ENCODE measurements at regions of chr4 and their contacts with region 1.

Region 1: DNA sequence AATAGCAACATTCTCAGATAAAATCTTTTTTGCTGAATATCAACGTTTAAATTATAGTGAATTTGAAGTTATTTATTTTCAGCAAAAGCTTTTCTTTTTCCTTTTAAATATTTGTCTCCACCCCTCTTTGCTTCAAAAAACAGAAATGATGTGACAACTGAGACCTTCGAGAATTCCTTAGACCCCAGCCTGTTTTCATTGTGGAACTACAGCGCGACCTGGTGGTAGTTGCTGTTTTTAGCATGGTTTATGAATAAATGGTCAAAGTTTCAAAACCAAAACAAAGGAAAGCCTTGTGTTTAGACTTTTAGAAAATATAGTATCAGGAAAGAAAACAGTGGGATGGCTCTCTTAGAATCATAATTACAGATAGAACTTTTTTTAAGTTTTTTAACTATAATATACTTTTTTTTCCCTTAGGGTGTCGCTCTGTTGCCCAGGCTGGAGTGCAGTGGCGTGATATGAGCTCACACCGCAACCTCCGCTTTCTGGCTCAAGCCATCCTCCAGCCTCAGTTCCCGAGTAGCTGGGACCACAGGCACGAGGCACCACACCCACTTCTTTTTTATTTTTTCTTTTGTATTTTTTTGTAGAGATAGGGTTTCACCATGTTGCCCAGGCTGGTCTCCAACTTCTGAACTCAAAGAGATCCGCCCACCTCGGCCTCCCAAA is 26.8 kb upstream of the TMEM184C start:
- DNase-seq: peak; percentile 45
- H3K4me3 ChIP-seq: no peak overlapping the region
- H3K27ac ChIP-seq: no peak overlapping the region
- H3K4me1 ChIP-seq: no peaks in the 10 kb centered on the region
- CTCF ChIP-seq: peak; percentile 88

Region 2: DNA sequence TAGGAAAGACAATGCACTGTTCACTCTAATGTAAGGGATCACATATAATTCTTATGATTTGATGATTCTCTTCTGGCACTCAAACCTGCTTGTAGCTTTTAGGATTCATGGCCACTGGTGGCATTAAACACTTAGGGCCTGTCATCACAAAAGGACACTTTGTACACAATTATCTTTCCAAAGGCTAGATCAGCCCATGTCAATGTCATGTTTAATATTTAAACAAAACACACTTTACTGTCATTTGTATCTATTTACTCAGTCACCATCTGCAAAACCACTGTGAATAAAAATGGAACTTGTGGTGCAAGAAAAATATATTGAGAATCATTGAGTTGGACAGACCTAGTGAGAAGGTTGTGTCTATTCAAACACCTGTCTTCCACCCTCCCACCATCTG is 561.1 kb before region 1 on chr4:
- CTCF ChIA-PET with region 1: no interaction called
- POLR2A ChIA-PET with region 1: no interaction called
- intact Hi-C with region 1: loop called (anchors 10 kb)
- DNase-seq: no peak
- H3K4me3 ChIP-seq: no peak overlapping the region
- H3K27ac ChIP-seq: no peak overlapping the region
- H3K4me1 ChIP-seq: no peaks in the 10 kb centered on the region
- CTCF ChIP-seq: no peak

Region 3: GRCh38 chr4:147160908-147161513 is 429.4 kb before region 1 on chr4:
- CTCF ChIA-PET with region 1: no interaction called
- POLR2A ChIA-PET with region 1: no interaction called
- intact Hi-C with region 1: loop called (anchors 2 kb)
- DNase-seq: peak; percentile 39
- H3K4me3 ChIP-seq: no peak overlapping the region
- H3K27ac ChIP-seq: no peak overlapping the region
- H3K4me1 ChIP-seq: no peaks in the 10 kb centered on the region
- CTCF ChIP-seq: peak; percentile 85

Region 4: DNA sequence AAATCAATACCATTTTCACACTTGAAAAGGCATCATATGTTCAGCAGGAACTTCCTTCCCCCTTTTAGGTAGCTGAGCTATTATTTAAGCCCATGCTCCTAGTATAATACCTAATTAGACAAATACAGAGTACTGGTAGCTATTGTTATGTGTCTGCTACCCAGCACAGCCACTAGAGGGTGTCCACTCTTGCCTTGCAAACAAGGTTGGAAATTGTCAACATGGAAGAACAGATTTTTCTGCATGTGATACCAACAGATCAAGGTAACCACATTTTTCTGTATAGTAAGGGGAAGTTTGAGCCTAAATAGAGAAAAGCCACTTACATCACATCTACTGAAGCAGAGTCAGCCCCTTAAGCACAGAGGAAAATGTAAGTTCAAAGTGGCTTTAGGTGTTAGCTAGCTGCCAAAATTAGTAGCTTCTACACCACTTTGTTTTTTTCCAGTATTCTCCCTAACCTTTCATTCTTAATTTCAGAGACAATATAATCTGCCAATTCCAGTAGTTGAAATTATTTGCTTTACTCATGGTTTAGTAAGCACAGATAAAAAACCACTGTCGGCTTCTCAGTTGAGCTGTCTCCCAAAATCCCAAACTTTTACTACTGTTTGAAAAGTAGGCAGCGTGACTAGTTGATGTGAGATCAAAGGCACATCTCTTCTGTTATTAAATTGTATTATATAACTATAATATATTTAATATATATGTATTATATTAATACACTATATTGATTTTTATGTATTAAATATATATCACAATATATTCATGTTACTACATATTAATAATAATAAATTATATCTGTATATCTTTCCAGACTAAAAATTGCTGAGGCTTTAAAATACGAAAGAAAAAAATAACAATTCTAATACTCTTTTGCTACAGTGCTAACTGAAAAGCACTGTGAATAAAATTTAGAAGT is 71.3 kb before region 1 on chr4:
- CTCF ChIA-PET with region 1: no interaction called
- POLR2A ChIA-PET with region 1: no interaction called
- intact Hi-C with region 1: loop called (anchors 2 kb)
- DNase-seq: peak; percentile 59
- H3K4me3 ChIP-seq: no peak overlapping the region
- H3K27ac ChIP-seq: no peak overlapping the region
- H3K4me1 ChIP-seq: no peaks in the 10 kb centered on the region
- CTCF ChIP-seq: peak; percentile 92

Measured in OCI-LY7 (cell line).